ENCODE measurements at regions of chr1 and their contacts with region 1.

Region 1: DNA sequence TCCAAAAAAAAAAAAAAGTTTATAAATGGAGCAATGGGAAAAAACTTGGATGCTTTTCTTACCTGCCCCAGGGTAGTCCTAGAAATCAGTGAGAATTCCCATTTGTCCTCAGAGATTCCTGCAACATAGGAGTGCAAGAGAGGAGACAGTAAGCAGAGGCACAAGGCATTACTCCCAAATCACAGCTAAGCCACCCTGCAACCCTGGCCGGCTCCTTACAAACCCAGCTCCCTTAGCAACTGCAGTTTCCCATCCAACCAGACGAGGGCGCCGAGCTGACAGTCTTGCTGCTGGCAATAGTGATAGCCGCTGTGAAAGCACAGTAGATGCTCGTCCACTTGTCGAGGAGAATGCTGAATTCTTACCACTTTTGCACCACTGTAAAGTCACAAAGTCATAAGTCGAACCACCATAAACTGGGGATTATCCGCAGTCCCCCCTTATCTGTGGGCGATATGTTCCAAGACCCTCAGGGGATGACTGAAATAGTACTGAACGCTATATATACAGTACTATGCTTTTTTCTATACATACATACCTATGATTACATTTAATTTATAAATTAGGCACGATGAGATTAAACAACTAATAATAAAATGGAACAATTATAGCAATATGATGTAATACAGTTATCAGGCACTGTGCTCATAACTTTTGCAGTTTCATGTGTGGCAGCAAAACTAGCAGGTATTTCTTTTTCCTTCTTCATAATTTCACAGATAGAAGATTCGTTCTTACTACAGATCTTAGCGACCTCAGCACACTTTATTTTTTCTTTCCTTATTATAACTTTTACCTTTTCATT is 6.0 kb upstream of the PITHD1 start:
- DNase-seq: peak; percentile 77
- ATAC-seq: peak; percentile 96
- H3K4me3 ChIP-seq: peak overlapping the region in 1 of 2 experiments; percentile 18; a peak in 1 of 4 replicates
- H3K27ac ChIP-seq: no peak overlapping the region
- H3K4me1 ChIP-seq: peaks cover 5% of the 10 kb centered on the region; the same call in 1 of the 2 replicates
- H3K27me3 ChIP-seq: no peaks in the 10 kb centered on the region
- CTCF ChIP-seq: peak; percentile 98

Region 2: GRCh38 chr1:23799570-23800399 is 27.5 kb after region 1 on chr1:
- CTCF ChIA-PET with region 1: interaction called, 13 read pairs
- POLR2A ChIA-PET with region 1: interaction called, 12 read pairs
- in situ Hi-C with region 1: no loop called
- intact Hi-C with region 1: no loop called
- DNase-seq: peak; percentile 87
- ATAC-seq: peak; percentile 56
- H3K4me3 ChIP-seq: peak overlapping the region; percentile 86 to 89
- H3K27ac ChIP-seq: peak overlapping the region; percentile 94
- H3K4me1 ChIP-seq: peaks cover 40% of the 10 kb centered on the region
- H3K27me3 ChIP-seq: no peaks in the 10 kb centered on the region
- CTCF ChIP-seq: no peak